Gastrocnemius medialis (tissue), 4 donors: ENCODE measurements at regions of chr12 and their contacts with region 1.

Region 1: GRCh38 chr12:124453419-124454351 is 113.7 kb downstream of the NCOR2 start:
- DNase-seq: peak; percentile 91 to 96
- ATAC-seq: peak; percentile 73 to 79
- H3K4me3 ChIP-seq: peak overlapping the region; percentile 21 to 42 (median 32)
- H3K27ac ChIP-seq: peak overlapping the region; percentile 90 to 99 (median 93)
- H3K4me1 ChIP-seq: peaks cover 55 to 68% of the 10 kb centered on the region in 2 donors
- H3K27me3 ChIP-seq: no peaks in the 10 kb centered on the region
- CTCF ChIP-seq: peak in 2 of 5 experiments; percentile 8 to 22
- POLR2A ChIP-seq: peak; percentile 66 to 74

Region 2: GRCh38 chr12:124369055-124369900 is 84.4 kb before region 1 on chr12:
- in situ Hi-C with region 1: loop called in 1 of 4 experiments (anchors 25 kb)
- intact Hi-C with region 1: loop called (anchors 1 kb)
- DNase-seq: peak; percentile 93 to 99
- ATAC-seq: peak; percentile 70 to 75
- H3K4me3 ChIP-seq: peak overlapping the region in 3 of 4 donors; percentile 30 to 41 (median 35)
- H3K27ac ChIP-seq: peak overlapping the region; percentile 93 to 98 (median 97)
- H3K4me1 ChIP-seq: peaks cover 75 to 83% of the 10 kb centered on the region in 2 donors
- H3K27me3 ChIP-seq: no peaks in the 10 kb centered on the region
- CTCF ChIP-seq: peak; percentile 58 to 82 (median 74)
- POLR2A ChIP-seq: peak; percentile 49 to 60

Region 3: GRCh38 chr12:124433147-124433874 is 20.4 kb before region 1 on chr12:
- in situ Hi-C with region 1: no loop called
- intact Hi-C with region 1: loop called (anchors 1 kb)
- DNase-seq: peak; percentile 95 to 97
- ATAC-seq: peak; percentile 80 to 82
- H3K4me3 ChIP-seq: no peak overlapping the region
- H3K27ac ChIP-seq: peak overlapping the region; percentile 81 to 87 (median 85)
- H3K4me1 ChIP-seq: peaks cover 24 to 25% of the 10 kb centered on the region in 2 donors
- H3K27me3 ChIP-seq: no peaks in the 10 kb centered on the region
- CTCF ChIP-seq: peak in 4 of 5 experiments; percentile 15 to 41 (median 39)
- POLR2A ChIP-seq: peak; percentile 25 to 39

Region 4: GRCh38 chr12:124509676-124510300 is 56.1 kb after region 1 on chr12:
- in situ Hi-C with region 1: no loop called
- intact Hi-C with region 1: loop called (anchors 2 kb)
- DNase-seq: peak; percentile 93 to 95
- ATAC-seq: peak; percentile 78 to 82
- H3K4me3 ChIP-seq: peak overlapping the region in 1 of 4 donors; percentile 8
- H3K27ac ChIP-seq: peak overlapping the region; percentile 86 to 98 (median 92)
- H3K4me1 ChIP-seq: peaks cover 74 to 89% of the 10 kb centered on the region in 2 donors
- H3K27me3 ChIP-seq: no peaks in the 10 kb centered on the region
- CTCF ChIP-seq: no peak
- POLR2A ChIP-seq: peak; percentile 73 to 83

Region 5: DNA sequence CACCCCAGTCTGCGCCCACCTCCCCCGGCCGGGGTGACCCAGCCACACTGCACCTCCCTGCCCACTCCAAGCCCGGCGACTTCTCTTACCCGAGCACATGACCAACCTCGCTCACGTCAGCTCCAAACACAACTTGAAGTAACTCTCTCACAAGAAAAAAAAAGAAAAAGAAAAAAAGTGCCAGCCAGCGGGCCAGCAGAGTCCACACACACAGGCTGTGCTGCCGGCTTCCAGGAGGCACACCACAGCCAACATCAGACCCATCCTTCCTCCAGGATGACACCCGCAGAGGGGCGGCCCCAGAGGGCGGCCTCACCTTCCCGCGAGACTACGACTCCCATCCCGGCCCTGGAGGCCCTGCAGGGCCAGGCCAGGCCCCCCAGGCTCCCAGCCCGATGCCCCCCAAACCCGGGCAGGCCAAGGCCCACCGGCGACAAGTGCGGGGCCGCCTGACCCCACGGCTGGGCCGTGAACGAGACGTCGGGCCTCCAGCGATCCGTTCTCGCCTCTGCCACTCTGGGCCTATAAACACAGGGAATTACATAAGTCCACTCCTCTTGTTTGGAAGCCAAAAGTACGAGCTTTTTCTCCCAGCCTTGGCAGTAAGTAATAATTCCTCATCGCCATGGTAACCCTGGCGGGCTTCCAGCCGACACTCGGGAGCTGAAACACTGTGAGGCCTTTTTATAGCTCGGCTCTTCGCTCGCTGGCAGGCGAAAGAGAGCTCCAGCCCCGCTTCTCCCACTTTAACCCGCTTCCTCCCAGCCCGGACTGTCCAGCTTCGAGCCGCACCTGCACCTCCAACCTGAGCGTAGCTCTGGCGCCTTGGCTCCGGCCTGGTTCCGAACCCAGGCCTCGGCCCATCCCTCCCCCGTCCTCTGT is 64.6 kb after region 1 on chr12:
- in situ Hi-C with region 1: no loop called
- intact Hi-C with region 1: loop called (anchors 2 kb)
- DNase-seq: peak; percentile 95 to 99
- ATAC-seq: peak; percentile 75 to 84
- H3K4me3 ChIP-seq: peak overlapping the region; percentile 53 to 59 (median 54)
- H3K27ac ChIP-seq: peak overlapping the region; percentile 90 to 99 (median 96)
- H3K4me1 ChIP-seq: peaks cover 83 to 94% of the 10 kb centered on the region in 2 donors
- H3K27me3 ChIP-seq: no peaks in the 10 kb centered on the region
- CTCF ChIP-seq: no peak
- POLR2A ChIP-seq: peak; percentile 45 to 65

Region 6: GRCh38 chr12:124567661-124568373 is 114.1 kb after region 1 on chr12:
- in situ Hi-C with region 1: no loop called
- intact Hi-C with region 1: loop called (anchors 2 kb)
- DNase-seq: peak; percentile 81 to 86
- ATAC-seq: peak; percentile 76 to 79
- H3K4me3 ChIP-seq: peak overlapping the region; percentile 58 to 93 (median 68)
- H3K27ac ChIP-seq: peak overlapping the region; percentile 91 to 98 (median 93)
- H3K4me1 ChIP-seq: peaks cover 27 to 38% of the 10 kb centered on the region in 2 donors
- H3K27me3 ChIP-seq: no peaks in the 10 kb centered on the region
- CTCF ChIP-seq: peak in 2 of 5 experiments; percentile 11 to 30
- POLR2A ChIP-seq: no peak